ENCODE measurements at regions of chr3 and their contacts with region 1.

Region 1: DNA sequence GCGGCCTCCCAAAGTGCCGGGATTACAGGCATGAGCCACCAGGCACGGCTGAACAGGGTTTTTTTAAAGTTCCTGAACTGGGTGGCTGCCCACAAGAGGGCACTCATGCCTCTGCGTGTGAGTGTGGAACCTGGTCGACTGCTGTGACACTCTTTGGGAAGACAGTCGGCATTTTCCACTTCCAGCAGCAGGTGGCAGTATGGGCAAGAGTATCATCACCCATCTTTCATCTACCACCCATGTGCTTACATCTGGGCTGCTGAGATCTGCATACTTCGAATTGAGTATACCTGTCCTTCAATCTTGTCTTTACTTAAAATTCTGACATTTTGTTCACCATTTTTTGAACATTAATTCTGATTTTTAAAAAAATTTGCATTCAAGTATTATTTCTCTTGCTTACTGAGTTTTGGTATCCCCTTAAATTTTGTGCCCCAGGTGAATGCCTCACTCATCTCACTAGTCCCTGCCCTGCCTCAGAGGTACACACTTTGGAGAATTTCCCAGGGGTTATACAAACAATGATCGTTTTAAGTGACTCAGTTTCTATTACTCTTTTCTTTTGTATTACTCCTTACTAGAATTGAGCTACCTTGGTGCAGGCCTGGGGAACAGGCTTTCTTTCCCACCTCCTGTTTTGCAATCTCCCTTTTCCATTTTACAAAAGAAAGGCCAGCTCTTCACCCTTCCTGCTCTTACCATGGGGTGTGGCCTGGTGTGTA is 11.8 kb downstream of the CLEC3B start:
- DNase-seq: peak; percentile 94 to 95
- ATAC-seq: peak; percentile 89
- H3K4me3 ChIP-seq: no peak overlapping the region
- H3K27ac ChIP-seq: no peak overlapping the region
- H3K4me1 ChIP-seq: no peaks in the 10 kb centered on the region
- H3K27me3 ChIP-seq: no peaks in the 10 kb centered on the region

Region 2: GRCh38 chr3:44942202-44942921 is 95.5 kb before region 1 on chr3:
- intact Hi-C with region 1: no loop called
- DNase-seq: no peak
- ATAC-seq: no peak
- H3K4me3 ChIP-seq: no peak overlapping the region
- H3K27ac ChIP-seq: no peak overlapping the region
- H3K4me1 ChIP-seq: no peaks in the 10 kb centered on the region
- H3K27me3 ChIP-seq: no peaks in the 10 kb centered on the region

Region 3: GRCh38 chr3:44976002-44976815 is 61.7 kb before region 1 on chr3 and contains the starts of genes EXOSC7 and ZDHHC3:
- intact Hi-C with region 1: loop called in 1 of 2 experiments (anchors 5 kb)
- DNase-seq: peak; percentile 92 to 96
- ATAC-seq: peak; percentile 96
- H3K4me3 ChIP-seq: peak within 1 kb of the TSS; percentile 71 to 95
- H3K27ac ChIP-seq: peak within 1 kb of the TSS in 1 of 2 donors; percentile 58
- H3K4me1 ChIP-seq: peaks cover 0 to 3% of the 10 kb centered on the region in 2 donors
- H3K27me3 ChIP-seq: no peaks in the 10 kb centered on the region
- total RNA-seq, gene EXOSC7: 30.7 to 31.2 TPM
- total RNA-seq, gene ZDHHC3: 60.5 to 62.2 TPM

Region 4: GRCh38 chr3:45210308-45211041 is 172.6 kb after region 1 on chr3:
- intact Hi-C with region 1: loop called (anchors 1 to 2 kb)
- DNase-seq: peak; percentile 93 to 95
- ATAC-seq: peak; percentile 91
- H3K4me3 ChIP-seq: no peak overlapping the region
- H3K27ac ChIP-seq: no peak overlapping the region
- H3K4me1 ChIP-seq: no peaks in the 10 kb centered on the region
- H3K27me3 ChIP-seq: no peaks in the 10 kb centered on the region

Region 5: DNA sequence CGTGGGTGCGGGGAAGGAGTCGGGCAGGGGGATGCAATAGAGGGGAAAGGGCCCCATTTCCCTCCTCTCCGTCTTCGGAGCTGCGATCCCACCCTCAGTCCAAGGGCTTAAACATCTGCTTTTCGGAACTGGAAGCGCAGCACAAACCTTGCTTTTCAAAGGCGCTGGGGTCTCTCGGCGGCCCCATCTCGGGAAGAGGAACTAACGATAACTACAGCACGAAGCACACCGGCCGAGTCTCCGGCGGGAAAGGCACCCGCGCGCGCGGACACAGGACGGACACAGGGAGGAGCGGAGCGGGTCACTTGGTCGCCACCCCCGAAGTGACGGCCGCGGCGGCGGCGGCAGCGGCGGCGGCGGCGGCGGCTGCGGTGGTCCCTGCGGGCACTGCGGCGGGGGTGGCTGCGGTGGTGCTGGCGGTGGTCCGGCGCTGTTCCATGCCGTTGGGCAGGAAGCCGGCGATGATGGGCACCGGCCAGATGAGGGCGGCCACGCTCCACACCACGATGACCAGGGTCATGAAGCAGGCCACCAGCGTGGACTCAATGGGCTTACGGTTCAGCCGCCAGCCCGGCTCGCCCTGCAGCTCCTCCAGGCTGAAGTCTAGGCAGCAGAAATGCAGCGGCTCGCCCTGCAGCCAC is 187.0 kb after region 1 on chr3:
- intact Hi-C with region 1: no loop called
- DNase-seq: peak; percentile 86 to 88
- ATAC-seq: peak; percentile 69
- H3K4me3 ChIP-seq: peak overlapping the region; percentile 59 to 96
- H3K27ac ChIP-seq: no peak overlapping the region
- H3K4me1 ChIP-seq: no peaks in the 10 kb centered on the region
- H3K27me3 ChIP-seq: no peaks in the 10 kb centered on the region

Region 6: DNA sequence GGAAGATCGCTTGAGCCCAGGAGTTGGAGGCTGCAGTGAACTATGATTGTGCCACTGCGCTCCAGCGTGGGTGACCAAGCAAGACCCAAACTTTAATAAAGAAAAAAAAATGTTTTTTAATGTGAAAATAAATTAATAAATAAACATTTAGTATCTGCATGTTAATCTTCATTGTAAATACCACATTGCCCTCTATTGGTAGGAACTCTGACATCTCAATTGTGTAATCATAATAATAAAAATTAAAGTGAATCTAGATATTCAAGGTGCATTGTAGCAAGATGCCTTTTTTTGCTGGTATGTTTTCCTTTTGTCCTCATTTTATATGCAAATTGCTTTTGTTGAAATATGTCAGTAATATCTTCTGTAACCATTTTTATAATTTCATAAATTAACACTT is 461.6 kb after region 1 on chr3:
- intact Hi-C with region 1: loop called (anchors 5 kb)
- DNase-seq: no peak
- ATAC-seq: no peak
- H3K4me3 ChIP-seq: no peak overlapping the region
- H3K27ac ChIP-seq: no peak overlapping the region
- H3K4me1 ChIP-seq: peaks cover 0 to 6% of the 10 kb centered on the region in 2 donors
- H3K27me3 ChIP-seq: no peaks in the 10 kb centered on the region